Left colon (tissue), 2 donors: ENCODE measurements at regions of chrX and their contacts with region 1.

Region 1: DNA sequence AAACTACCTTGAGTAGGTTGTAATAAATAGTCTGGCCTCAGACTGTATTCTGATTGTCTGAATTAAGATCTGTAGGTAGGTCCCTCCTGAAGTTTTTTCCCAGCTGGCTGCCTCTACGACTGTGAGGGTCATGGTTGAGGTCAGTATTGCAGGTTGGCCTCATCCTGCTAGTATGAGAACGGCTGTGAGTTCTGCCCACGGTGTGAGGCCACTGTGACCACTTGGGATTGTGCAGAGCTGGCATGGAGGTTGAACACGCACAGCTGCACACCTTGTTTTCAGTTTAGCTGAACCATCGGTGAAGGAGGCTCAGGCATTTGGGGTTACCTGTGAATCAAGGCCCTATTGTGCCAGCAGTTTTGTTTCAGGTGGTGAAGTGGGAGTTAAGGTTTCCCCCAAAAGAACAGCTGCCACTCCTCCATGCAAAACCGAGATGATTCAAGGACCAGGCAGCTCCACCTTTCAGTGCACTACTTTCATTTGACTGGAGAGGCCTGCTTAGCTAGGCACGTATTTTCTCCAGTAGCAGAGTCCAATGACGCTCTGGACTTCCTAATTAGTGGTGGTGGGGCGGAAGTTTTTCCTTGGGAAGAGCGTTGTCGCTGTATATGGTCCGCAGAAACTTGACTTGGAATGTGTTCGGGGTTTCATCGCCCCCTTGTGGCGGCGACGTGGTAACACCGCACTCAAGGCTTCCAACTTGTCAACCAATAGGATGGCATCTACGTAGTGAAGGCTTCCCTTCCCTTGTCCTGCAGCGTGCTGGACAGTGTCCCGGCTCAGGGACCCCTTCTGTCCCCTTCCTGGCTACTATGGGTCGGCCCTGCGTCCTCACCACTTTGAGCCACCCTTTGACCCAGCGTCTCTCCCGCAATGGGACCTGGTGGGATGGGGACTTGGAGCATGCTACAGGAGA is 13.8 kb downstream of the CMC4 start:
- DNase-seq: peak; percentile 51 to 58
- ATAC-seq: peak; percentile 86

Region 2: DNA sequence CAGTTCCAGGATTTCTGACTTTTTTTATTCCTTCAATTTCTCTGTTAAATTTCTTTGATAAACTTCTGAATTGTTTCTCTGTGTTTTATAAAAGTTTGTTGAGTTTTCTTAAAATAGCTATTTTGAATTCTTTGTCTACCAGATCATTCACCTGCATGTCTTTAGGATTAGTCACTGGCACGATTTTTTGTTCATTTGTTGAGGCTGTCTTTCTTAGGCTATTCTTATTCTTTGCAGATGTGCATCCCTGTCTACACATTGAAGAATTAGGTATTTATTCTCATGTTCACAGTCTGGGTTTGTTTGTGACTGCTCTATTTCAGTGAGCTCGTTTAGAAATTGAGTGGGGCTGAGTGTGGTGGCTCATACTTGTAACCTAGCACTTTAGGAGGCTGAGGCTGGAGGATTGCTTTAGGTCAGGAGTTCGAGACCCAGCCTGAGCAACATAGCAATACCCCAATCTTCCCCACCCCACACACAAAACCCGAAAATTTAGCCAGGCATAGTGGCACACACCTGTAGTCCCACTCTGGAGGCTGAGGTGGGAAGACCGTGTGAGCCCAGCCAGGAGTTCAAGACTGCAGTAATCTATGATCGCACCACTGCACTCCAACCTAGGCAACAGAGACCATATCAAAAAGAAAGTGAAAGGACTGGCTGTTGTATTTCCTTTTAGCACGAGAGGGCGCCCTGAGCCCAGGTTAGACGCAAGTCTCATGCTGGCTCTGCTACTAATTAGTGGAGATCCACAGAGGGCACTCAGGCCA is 76.6 kb before region 1 on chrX:
- intact Hi-C with region 1: loop called in 1 of 2 experiments (anchors 5 kb)
- DNase-seq: peak; percentile 42 to 81
- ATAC-seq: peak; percentile 99

Region 3: GRCh38 chrX:155246748-155247147 is 189.6 kb after region 1 on chrX:
- intact Hi-C with region 1: no loop called
- DNase-seq: no peak
- ATAC-seq: no peak